ENCODE measurements at regions of chr3 and their contacts with region 1.

Region 1: GRCh38 chr3:138594150-138594934 is at the start of gene CEP70:
- DNase-seq: peak; percentile 96
- H3K4me3 Mint-ChIP-seq: peak within 1 kb of the TSS; percentile 81
- H3K27ac Mint-ChIP-seq: peak within 1 kb of the TSS; percentile 69
- H3K4me1 Mint-ChIP-seq: no peaks in the 10 kb centered on the region
- H3K27me3 Mint-ChIP-seq: no peaks in the 10 kb centered on the region
- CTCF ChIP-seq: peak; percentile 81
- total RNA-seq, gene CEP70: 21.3 and 25.9 TPM in 2 replicates

Region 2: DNA sequence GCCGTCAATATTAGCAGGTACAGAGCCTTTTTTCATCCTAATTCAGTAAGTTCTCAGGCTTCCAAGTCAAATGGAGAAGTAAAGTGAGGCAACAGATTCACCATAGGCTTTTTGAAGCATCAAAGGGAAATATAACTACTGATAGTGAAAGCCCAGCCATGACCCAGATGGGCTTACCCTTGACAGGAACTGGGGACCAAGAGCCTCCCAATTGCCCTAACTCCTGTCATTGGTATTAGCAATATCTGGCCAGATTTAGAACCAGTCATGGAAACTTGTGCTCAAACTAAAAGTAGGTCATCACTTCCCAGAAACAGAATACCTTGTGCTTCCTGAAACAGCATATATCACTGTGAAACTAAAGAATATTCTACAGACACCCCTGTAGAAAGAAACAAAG is 297.7 kb before region 1 on chr3:
- CTCF ChIA-PET with region 1: no interaction called
- POLR2A ChIA-PET with region 1: no interaction called
- intact Hi-C with region 1: no loop called
- DNase-seq: no peak
- H3K4me3 Mint-ChIP-seq: no peak overlapping the region
- H3K27ac Mint-ChIP-seq: no peak overlapping the region
- H3K4me1 Mint-ChIP-seq: no peaks in the 10 kb centered on the region
- H3K27me3 Mint-ChIP-seq: no peaks in the 10 kb centered on the region
- CTCF ChIP-seq: no peak

Region 3: DNA sequence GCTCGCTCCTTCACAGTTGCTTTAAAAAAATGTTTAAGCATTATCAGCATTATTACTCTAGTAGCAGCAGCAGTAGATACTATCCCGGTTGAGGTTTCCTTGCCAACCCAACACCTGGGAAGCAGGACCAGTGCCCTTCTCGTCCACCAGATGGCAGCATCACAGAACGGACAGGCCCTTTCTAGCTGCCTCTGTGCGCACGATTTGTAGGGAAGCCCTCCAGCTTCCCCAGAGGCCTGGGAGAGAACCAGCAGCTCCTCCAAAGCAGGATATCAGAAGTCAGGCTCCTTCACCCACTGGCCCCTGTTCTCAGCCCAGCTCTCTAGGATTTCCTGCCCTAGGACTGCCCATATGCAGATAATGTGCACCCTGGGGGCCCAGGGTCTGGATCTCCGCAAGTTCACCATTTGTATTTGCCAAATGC is 176.8 kb before region 1 on chr3:
- CTCF ChIA-PET with region 1: interaction called, 49 read pairs
- POLR2A ChIA-PET with region 1: interaction called, 3 read pairs
- intact Hi-C with region 1: loop called (anchors 1 kb)
- DNase-seq: peak; percentile 85
- H3K4me3 Mint-ChIP-seq: no peak overlapping the region
- H3K27ac Mint-ChIP-seq: no peak overlapping the region
- H3K4me1 Mint-ChIP-seq: no peaks in the 10 kb centered on the region
- H3K27me3 Mint-ChIP-seq: no peaks in the 10 kb centered on the region
- CTCF ChIP-seq: peak; percentile 84

Region 4: DNA sequence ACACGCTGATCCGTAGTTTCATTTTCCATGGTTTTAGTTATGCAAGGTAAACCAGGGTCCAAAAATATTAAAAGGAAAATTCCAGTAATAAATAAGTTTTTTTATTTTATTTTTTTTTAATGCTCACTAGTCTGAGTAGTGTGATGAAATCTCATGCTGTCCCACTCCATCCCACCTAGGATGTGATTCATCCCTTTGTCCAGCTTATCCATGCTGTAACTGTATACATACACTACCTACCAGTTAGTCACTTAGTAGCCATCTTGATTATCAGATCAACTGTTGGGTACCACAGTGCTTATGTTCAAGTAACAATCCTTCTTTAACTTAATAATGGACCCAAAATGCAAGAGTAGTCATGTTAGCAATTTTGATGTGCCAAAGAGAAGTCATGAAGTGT is 84.8 kb before region 1 on chr3:
- CTCF ChIA-PET with region 1: no interaction called
- POLR2A ChIA-PET with region 1: no interaction called
- intact Hi-C with region 1: no loop called
- DNase-seq: no peak
- H3K4me3 Mint-ChIP-seq: no peak overlapping the region
- H3K27ac Mint-ChIP-seq: no peak overlapping the region
- H3K4me1 Mint-ChIP-seq: no peaks in the 10 kb centered on the region
- H3K27me3 Mint-ChIP-seq: no peaks in the 10 kb centered on the region
- CTCF ChIP-seq: no peak

Region 5: GRCh38 chr3:138578961-138579574 is 15.3 kb before region 1 on chr3:
- CTCF ChIA-PET with region 1: interaction called, 13 read pairs
- POLR2A ChIA-PET with region 1: interaction called, 6 read pairs
- intact Hi-C with region 1: no loop called
- DNase-seq: no peak
- H3K4me3 Mint-ChIP-seq: no peak overlapping the region
- H3K27ac Mint-ChIP-seq: no peak overlapping the region
- H3K4me1 Mint-ChIP-seq: peaks cover 10% of the 10 kb centered on the region
- H3K27me3 Mint-ChIP-seq: no peaks in the 10 kb centered on the region
- CTCF ChIP-seq: no peak

Region 6: GRCh38 chr3:138774529-138775253 is 180.3 kb after region 1 on chr3:
- CTCF ChIA-PET with region 1: interaction called, 10 read pairs
- POLR2A ChIA-PET with region 1: no interaction called
- intact Hi-C with region 1: no loop called
- DNase-seq: peak; percentile 98
- H3K4me3 Mint-ChIP-seq: no peak overlapping the region
- H3K27ac Mint-ChIP-seq: peak overlapping the region; percentile 96
- H3K4me1 Mint-ChIP-seq: peaks cover 18% of the 10 kb centered on the region
- H3K27me3 Mint-ChIP-seq: no peaks in the 10 kb centered on the region
- CTCF ChIP-seq: no peak

Region 7: DNA sequence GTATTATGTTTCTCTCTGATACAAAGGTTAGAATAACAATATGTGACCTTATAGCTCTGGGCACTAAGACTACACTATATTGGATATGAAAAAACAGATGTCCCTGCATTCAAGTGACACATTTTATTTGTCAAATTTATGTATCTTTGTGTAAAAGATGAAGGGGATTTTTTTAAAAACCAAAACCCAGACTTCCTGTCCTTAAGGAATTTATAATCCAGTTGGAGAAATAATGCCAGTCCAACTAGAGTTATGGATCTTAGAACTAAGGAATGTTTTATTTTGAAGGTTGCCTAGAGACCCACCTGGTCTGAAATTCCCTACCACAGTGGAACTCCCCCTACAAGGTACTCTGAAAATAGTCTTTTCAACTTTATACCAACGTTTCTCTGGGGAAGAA is 273.7 kb after region 1 on chr3:
- CTCF ChIA-PET with region 1: no interaction called
- POLR2A ChIA-PET with region 1: no interaction called
- intact Hi-C with region 1: no loop called
- DNase-seq: no peak
- H3K4me3 Mint-ChIP-seq: no peak overlapping the region
- H3K27ac Mint-ChIP-seq: no peak overlapping the region
- H3K4me1 Mint-ChIP-seq: peaks cover 10% of the 10 kb centered on the region
- H3K27me3 Mint-ChIP-seq: no peaks in the 10 kb centered on the region
- CTCF ChIP-seq: no peak

Region 8: GRCh38 chr3:138923531-138923994 is 329.2 kb after region 1 on chr3:
- CTCF ChIA-PET with region 1: interaction called, 364 read pairs
- POLR2A ChIA-PET with region 1: interaction called, 62 read pairs
- intact Hi-C with region 1: loop called (anchors 1 kb)
- DNase-seq: peak; percentile 93
- H3K4me3 Mint-ChIP-seq: no peak overlapping the region
- H3K27ac Mint-ChIP-seq: peak overlapping the region; percentile 15
- H3K4me1 Mint-ChIP-seq: peaks cover 17% of the 10 kb centered on the region
- H3K27me3 Mint-ChIP-seq: no peaks in the 10 kb centered on the region
- CTCF ChIP-seq: peak; percentile 79

Measured in MCF 10A (cell line).